Activated CD4-positive, alpha-beta memory T cell treated with anti-CD3 and anti-CD28 coated beads, Interleukin-2, amount 10 ng/mL, durations not matched to agents 7 days and 5 days (primary cell): ENCODE measurements at regions of chr17 and their contacts with region 1.

Region 1: DNA sequence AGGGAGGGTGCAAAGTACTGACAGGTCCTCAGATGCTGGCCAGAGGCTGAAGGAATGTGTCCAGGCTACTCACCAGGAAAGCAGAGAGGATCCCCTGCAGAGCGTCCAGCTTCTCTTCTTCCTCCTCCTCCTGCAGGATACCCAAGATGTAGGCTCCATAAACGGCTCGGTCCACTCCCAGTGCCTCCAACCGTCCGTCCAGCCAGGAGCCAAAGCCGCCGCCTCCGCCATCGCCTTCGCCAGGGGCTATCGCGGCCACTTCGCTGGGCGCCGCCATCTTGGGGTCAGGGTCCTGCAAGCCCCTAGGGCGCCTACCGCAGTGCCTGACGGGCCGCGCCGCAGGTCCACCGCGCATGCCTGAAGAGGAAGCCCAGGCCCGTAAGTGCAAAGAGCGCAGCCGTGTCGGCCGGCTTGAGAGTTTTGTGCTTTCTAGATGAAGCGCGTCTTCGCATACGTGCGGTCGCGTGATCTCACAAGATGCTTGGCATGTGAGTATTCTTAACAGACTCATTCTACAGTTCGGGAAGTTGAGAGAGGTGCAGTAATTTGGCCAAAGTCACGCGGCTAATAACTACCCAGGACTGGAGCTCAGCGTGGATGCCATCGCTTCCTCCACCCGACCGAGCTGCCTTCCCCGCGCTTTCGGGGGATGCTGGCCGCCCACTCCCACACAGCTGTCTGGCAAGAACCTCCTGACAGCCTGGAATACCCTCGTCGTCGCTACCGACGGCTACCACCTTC is at the start of gene CCDC43:
- DNase-seq: peak; percentile 93
- H3K4me3 Mint-ChIP-seq: peak within 1 kb of the TSS; percentile 97
- H3K27ac Mint-ChIP-seq: peak within 1 kb of the TSS; percentile 91
- H3K4me1 Mint-ChIP-seq: peaks cover 32% of the 10 kb centered on the region
- H3K27me3 Mint-ChIP-seq: no peaks in the 10 kb centered on the region
- total RNA-seq, gene CCDC43: 22.0 to 22.8 TPM

Region 2: DNA sequence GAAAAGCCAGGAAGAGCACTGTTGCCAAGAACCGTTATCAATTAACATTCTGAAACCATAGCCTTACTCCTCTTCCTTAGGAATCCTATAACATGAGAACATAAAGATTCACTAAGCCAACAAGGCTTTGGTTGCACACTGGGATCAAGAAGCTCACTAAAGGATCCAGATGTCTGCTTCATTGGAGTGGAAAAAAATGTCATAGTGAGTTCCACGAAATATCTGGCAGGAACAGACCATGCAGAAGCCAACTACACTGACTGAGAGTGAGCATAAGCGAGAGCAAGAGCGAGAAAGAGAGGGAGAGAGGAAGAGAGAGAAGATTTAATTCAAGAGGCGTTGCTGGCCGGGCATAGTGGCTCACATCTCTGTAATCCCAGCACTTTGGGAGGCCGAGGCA is 46.8 kb before region 1 on chr17:
- CTCF ChIA-PET with region 1: no interaction called
- POLR2A ChIA-PET with region 1: no interaction called
- DNase-seq: no peak
- H3K4me3 Mint-ChIP-seq: no peak overlapping the region
- H3K27ac Mint-ChIP-seq: no peak overlapping the region
- H3K4me1 Mint-ChIP-seq: no peaks in the 10 kb centered on the region
- H3K27me3 Mint-ChIP-seq: peaks cover 22% of the 10 kb centered on the region

Region 3: GRCh38 chr17:44708401-44709181 is 18.9 kb after region 1 on chr17 and contains the start of gene DBF4B:
- CTCF ChIA-PET with region 1: interaction called, 9 read pairs
- POLR2A ChIA-PET with region 1: interaction called, 45 read pairs
- DNase-seq: peak; percentile 87
- H3K4me3 Mint-ChIP-seq: no peak within 1 kb of the TSS
- H3K27ac Mint-ChIP-seq: no peak within 1 kb of the TSS
- H3K4me1 Mint-ChIP-seq: peaks cover 9% of the 10 kb centered on the region
- H3K27me3 Mint-ChIP-seq: no peaks in the 10 kb centered on the region
- total RNA-seq, gene DBF4B: 29.0 to 31.0 TPM

Region 4: DNA sequence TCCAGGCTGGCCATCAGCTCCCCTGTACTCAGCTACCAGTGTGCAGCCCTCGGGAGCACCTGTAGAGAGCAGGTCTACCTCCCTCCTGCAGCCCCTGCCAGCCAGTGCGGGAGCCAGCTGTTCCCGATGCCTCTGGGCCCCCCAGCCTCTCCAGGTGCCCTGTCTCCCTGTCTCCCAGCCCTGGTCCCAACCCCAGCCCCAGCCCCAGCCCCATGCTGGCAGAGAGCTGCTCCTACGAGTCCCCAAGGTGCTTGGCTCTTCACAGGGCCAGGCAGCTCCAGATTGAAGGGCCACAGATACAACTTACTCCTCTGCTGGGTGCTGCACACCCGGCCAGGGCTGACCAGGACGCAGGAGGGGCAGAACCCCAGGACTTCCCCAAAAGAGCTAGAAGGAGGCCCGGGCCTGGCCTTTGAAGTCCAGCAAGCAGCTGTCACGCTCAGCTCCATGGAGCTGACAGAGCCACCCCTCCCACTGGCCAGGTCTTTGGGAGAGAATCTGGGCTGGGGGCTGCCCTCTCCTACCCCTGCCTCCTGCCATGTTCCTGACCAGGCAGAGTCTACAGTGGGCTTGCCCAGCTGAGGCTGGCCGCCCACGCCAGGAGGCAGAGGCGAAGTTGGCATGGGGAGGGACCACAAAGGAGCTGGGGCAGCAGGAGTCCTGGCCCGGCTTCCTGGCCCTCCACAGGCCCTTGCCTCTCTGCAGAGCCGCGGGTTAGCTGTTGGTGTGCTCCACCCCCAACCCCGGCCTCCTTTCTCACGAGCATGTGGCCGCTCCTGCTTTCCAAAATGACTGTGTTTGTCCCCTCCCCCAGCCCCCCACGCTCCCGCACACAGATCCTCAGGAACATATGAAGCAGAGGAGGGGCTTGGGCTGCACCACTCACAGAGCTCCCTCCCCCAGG is 59.7 kb after region 1 on chr17:
- CTCF ChIA-PET with region 1: no interaction called
- POLR2A ChIA-PET with region 1: no interaction called
- DNase-seq: no peak
- H3K4me3 Mint-ChIP-seq: no peak overlapping the region
- H3K27ac Mint-ChIP-seq: no peak overlapping the region
- H3K4me1 Mint-ChIP-seq: no peaks in the 10 kb centered on the region
- H3K27me3 Mint-ChIP-seq: no peaks in the 10 kb centered on the region

Region 5: DNA sequence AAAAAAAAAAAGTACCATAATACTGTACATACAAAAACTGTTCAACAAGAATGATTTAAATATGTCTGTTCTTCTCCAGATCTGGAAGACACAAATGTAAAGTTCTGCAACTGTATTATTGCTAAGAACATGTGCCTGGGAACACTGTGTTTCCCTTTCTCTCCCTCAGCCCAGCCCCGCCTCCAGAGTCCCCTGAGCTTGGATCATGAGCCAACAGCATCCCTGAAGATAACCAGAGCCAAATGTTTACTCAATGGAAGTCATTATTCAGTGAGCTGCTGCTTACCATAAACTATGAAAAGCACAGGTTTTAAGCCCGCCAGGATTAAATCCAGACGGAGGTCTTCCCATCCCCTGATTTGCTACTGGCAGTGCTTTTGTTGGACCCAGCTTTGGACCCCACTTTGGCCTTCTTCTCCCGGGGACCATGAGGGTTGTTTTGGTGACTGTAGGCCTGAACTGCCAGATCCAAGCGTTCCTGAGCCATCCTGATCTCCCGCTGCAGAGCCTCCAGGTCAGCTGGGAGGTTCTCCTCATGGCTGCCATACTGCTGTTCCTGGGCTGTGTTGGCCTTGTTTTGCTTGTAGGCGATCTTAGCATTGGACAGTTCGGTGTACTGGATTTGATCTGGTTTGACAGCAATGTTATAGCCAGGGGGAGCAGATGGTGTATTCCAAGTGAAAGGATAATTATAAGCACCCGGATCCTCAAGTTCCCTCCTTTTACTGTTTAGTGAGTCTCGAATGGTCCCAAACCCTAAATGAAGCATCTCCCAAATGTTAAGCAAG is 114.8 kb after region 1 on chr17:
- CTCF ChIA-PET with region 1: no interaction called
- POLR2A ChIA-PET with region 1: no interaction called
- DNase-seq: no peak
- H3K4me3 Mint-ChIP-seq: no peak overlapping the region
- H3K27ac Mint-ChIP-seq: no peak overlapping the region
- H3K4me1 Mint-ChIP-seq: no peaks in the 10 kb centered on the region
- H3K27me3 Mint-ChIP-seq: peaks cover 31% of the 10 kb centered on the region